ENCODE measurements at regions of chr15 and their contacts with region 1.

Region 1: DNA sequence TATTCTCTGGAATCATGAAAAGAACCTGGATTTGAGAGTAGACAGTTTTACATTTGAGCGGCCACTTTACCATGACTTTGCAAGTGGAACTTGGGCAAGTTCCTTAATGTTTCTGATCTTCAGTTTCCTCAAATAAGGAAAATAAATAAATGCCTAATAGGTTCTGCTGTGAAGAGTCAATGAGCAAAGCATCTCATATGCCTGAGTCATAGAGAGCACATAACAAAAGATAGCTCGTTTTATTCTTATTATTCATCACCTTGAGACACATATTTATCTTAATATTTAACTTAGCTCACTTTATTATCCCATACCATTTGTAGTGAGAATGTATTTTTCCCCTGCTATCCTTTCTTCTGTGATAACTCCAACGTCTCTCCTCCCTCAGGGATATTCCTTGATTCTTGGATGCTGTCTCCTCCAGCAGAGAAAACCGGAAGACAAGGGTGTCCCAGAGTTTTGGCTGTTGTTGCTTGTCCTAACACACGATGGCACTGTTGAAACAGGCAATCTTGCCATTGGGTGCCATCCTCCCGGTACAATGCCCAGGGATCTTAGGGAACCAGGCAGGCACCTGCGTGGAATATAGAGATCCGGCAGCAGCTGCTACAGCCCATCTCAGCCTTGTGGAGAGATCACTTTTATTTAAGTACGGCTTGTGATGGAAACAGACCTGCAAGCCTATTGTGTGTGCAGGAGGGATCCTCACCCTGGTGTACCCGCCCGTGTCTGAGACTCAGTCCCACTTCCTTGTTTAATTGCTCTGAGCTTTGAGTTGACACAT is 33.3 kb upstream of the VPS33B start:
- DNase-seq: no peak
- H3K4me3 Mint-ChIP-seq: no peak overlapping the region
- H3K27ac Mint-ChIP-seq: no peak overlapping the region
- H3K4me1 Mint-ChIP-seq: no peaks in the 10 kb centered on the region
- H3K27me3 Mint-ChIP-seq: peaks cover 55% of the 10 kb centered on the region

Region 2: DNA sequence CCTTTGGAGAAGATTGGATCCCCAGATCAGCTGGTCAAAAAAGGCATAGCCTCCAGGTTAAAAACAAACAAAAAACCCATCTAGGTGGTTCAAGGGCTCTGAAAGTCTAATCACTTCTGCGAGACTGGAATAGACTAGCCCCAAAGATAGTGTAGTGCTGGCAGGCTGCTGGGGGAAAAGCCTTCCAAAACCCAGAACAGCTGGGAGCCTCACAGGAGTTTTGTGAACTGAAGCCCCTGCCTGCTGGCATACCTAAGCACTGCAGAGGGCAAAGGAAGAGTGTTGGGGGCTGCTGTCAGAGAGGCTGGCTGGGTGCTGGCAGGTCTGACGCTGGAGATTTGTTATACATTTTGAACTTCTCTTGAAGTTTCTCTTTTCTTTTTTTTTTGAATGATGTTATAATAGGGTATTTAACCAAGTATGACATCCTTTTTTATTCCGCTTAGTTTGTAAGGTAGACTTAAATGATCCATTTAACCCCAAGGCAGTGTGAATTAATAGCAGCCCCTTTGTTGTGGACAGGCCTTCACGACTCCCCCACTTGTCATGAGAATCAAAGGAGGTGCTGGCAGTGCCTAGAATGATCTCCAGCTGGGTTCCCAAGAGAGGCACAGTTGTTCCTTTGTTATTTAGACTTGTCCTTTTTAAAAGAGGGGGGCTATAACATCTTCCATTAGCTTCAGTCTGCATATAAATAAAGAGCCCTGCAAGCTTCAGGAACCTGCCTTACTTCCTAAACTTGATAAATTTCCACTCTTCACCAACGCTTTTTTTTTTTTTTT is 472.1 kb before region 1 on chr15:
- intact Hi-C with region 1: no loop called
- DNase-seq: no peak
- H3K4me3 Mint-ChIP-seq: no peak overlapping the region
- H3K27ac Mint-ChIP-seq: peak overlapping the region; percentile 68
- H3K4me1 Mint-ChIP-seq: peaks cover 53% of the 10 kb centered on the region
- H3K27me3 Mint-ChIP-seq: no peaks in the 10 kb centered on the region

Region 3: GRCh38 chr15:91224755-91225380 is 169.1 kb after region 1 on chr15:
- intact Hi-C with region 1: loop called (anchors 1 kb)
- DNase-seq: no peak
- H3K4me3 Mint-ChIP-seq: no peak overlapping the region
- H3K27ac Mint-ChIP-seq: no peak overlapping the region
- H3K4me1 Mint-ChIP-seq: no peaks in the 10 kb centered on the region
- H3K27me3 Mint-ChIP-seq: peaks cover 5% of the 10 kb centered on the region

Region 4: GRCh38 chr15:91271565-91272153 is 215.9 kb after region 1 on chr15:
- intact Hi-C with region 1: loop called (anchors 1 kb)
- DNase-seq: peak; percentile 39
- H3K4me3 Mint-ChIP-seq: no peak overlapping the region
- H3K27ac Mint-ChIP-seq: no peak overlapping the region
- H3K4me1 Mint-ChIP-seq: peaks cover 10% of the 10 kb centered on the region
- H3K27me3 Mint-ChIP-seq: peaks cover 40% of the 10 kb centered on the region

Region 5: GRCh38 chr15:91429973-91430372 is 374.2 kb after region 1 on chr15:
- intact Hi-C with region 1: no loop called
- DNase-seq: no peak
- H3K4me3 Mint-ChIP-seq: no peak overlapping the region
- H3K27ac Mint-ChIP-seq: no peak overlapping the region
- H3K4me1 Mint-ChIP-seq: no peaks in the 10 kb centered on the region
- H3K27me3 Mint-ChIP-seq: peaks cover 6% of the 10 kb centered on the region